ENCODE measurements at regions of chr14 and their contacts with region 1.

Region 1: GRCh38 chr14:95346820-95347219 is 27.1 kb upstream of the CLMN start:
- DNase-seq: no peak
- H3K4me3 ChIP-seq: no peak overlapping the region
- H3K27ac ChIP-seq: no peak overlapping the region
- H3K4me1 ChIP-seq: no peaks in the 10 kb centered on the region
- H3K27me3 ChIP-seq: no peaks in the 10 kb centered on the region
- CTCF ChIP-seq: no peak
- EP300 ChIP-seq: no peak
- POLR2A ChIP-seq: no peak
- RAD21 ChIP-seq: no peak

Region 2: GRCh38 chr14:95231966-95232633 is 114.7 kb before region 1 on chr14:
- CTCF ChIA-PET with region 1: interaction called, 12 read pairs
- POLR2A ChIA-PET with region 1: no interaction called
- DNase-seq: no peak
- H3K4me3 ChIP-seq: no peak overlapping the region
- H3K27ac ChIP-seq: no peak overlapping the region
- H3K4me1 ChIP-seq: peaks cover 0 to 3% (median 1%) of the 10 kb centered on the region in 4 experiments; a peak in 3 of 7 replicates
- H3K27me3 ChIP-seq: no peaks in the 10 kb centered on the region
- CTCF ChIP-seq: no peak
- EP300 ChIP-seq: no peak
- POLR2A ChIP-seq: no peak
- RAD21 ChIP-seq: no peak

Region 3: GRCh38 chr14:95255487-95255886 is 91.3 kb before region 1 on chr14:
- CTCF ChIA-PET with region 1: no interaction called
- POLR2A ChIA-PET with region 1: no interaction called
- DNase-seq: peak; percentile 73 to 76
- H3K4me3 ChIP-seq: peak overlapping the region in 1 of 4 experiments; percentile 31; a peak in 2 of 8 replicates
- H3K27ac ChIP-seq: no peak overlapping the region
- H3K4me1 ChIP-seq: peaks cover 6 to 32% (median 21%) of the 10 kb centered on the region in 4 experiments
- H3K27me3 ChIP-seq: no peaks in the 10 kb centered on the region
- CTCF ChIP-seq: no peak
- EP300 ChIP-seq: no peak
- POLR2A ChIP-seq: no peak
- RAD21 ChIP-seq: no peak; a peak in 1 of 4 replicates

Region 4: GRCh38 chr14:95392841-95393240 is 46.0 kb after region 1 on chr14:
- CTCF ChIA-PET with region 1: no interaction called
- POLR2A ChIA-PET with region 1: no interaction called
- DNase-seq: no peak
- H3K4me3 ChIP-seq: no peak overlapping the region
- H3K27ac ChIP-seq: no peak overlapping the region
- H3K4me1 ChIP-seq: no peaks in the 10 kb centered on the region
- H3K27me3 ChIP-seq: no peaks in the 10 kb centered on the region
- CTCF ChIP-seq: no peak
- EP300 ChIP-seq: no peak
- POLR2A ChIP-seq: no peak
- RAD21 ChIP-seq: no peak

Region 5: GRCh38 chr14:95507701-95508103 is 160.9 kb after region 1 on chr14:
- CTCF ChIA-PET with region 1: no interaction called
- POLR2A ChIA-PET with region 1: no interaction called
- DNase-seq: no peak
- H3K4me3 ChIP-seq: no peak overlapping the region
- H3K27ac ChIP-seq: no peak overlapping the region
- H3K4me1 ChIP-seq: no peaks in the 10 kb centered on the region
- H3K27me3 ChIP-seq: no peaks in the 10 kb centered on the region; a peak in 1 of 7 replicates
- CTCF ChIP-seq: no peak
- EP300 ChIP-seq: no peak
- POLR2A ChIP-seq: no peak
- RAD21 ChIP-seq: no peak